CD8-positive, alpha-beta T cell (primary cell): ENCODE measurements at regions of chr2 and their contacts with region 1.

Region 1: GRCh38 chr2:42303252-42303651 is 57.8 kb downstream of the COX7A2L start:
- DNase-seq: no peak
- ATAC-seq: no peak
- H3K4me3 ChIP-seq: no peak overlapping the region
- H3K4me3 Mint-ChIP-seq: no peak overlapping the region
- H3K27ac ChIP-seq: no peak overlapping the region
- H3K27ac Mint-ChIP-seq: no peak overlapping the region
- H3K4me1 ChIP-seq: peaks cover 22% of the 10 kb centered on the region
- H3K4me1 Mint-ChIP-seq: peaks cover 40% of the 10 kb centered on the region
- H3K27me3 ChIP-seq: no peaks in the 10 kb centered on the region
- H3K27me3 Mint-ChIP-seq: no peaks in the 10 kb centered on the region
- CTCF ChIP-seq: no peak

Region 2: DNA sequence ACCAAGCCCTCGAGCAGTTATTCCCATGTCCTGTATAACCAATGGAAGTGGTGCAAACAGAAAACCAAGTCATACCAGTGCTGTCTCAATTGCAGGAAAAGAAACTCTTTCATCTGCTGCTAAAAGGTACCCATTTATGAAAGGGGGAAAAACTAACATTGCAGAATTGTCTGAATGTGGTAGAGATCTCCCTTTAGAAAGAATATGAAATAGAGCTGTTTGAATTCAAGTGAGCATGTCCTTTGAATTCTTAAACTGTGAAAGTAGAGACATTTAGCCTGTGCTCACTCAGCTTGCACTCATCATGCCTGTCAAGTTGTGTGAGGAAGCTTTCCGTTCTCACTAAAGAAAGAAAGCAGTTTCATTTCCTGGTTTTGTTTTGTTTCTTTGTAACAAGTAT is 46.7 kb before region 1 on chr2:
- CTCF ChIA-PET with region 1: no interaction called
- POLR2A ChIA-PET with region 1: no interaction called
- intact Hi-C with region 1: loop called (anchors 5 to 10 kb)
- DNase-seq: peak in 1 of 9 experiments; percentile 38
- ATAC-seq: no peak
- H3K4me3 ChIP-seq: no peak overlapping the region
- H3K4me3 Mint-ChIP-seq: no peak overlapping the region
- H3K27ac ChIP-seq: peak overlapping the region in 1 of 2 experiments; percentile 42
- H3K27ac Mint-ChIP-seq: no peak overlapping the region
- H3K4me1 ChIP-seq: peaks cover 29% of the 10 kb centered on the region
- H3K4me1 Mint-ChIP-seq: peaks cover 57% of the 10 kb centered on the region
- H3K27me3 ChIP-seq: no peaks in the 10 kb centered on the region
- H3K27me3 Mint-ChIP-seq: no peaks in the 10 kb centered on the region
- CTCF ChIP-seq: no peak